Psoas muscle (tissue), 8 donors: ENCODE measurements at regions of chr14 and their contacts with region 1.

Region 1: DNA sequence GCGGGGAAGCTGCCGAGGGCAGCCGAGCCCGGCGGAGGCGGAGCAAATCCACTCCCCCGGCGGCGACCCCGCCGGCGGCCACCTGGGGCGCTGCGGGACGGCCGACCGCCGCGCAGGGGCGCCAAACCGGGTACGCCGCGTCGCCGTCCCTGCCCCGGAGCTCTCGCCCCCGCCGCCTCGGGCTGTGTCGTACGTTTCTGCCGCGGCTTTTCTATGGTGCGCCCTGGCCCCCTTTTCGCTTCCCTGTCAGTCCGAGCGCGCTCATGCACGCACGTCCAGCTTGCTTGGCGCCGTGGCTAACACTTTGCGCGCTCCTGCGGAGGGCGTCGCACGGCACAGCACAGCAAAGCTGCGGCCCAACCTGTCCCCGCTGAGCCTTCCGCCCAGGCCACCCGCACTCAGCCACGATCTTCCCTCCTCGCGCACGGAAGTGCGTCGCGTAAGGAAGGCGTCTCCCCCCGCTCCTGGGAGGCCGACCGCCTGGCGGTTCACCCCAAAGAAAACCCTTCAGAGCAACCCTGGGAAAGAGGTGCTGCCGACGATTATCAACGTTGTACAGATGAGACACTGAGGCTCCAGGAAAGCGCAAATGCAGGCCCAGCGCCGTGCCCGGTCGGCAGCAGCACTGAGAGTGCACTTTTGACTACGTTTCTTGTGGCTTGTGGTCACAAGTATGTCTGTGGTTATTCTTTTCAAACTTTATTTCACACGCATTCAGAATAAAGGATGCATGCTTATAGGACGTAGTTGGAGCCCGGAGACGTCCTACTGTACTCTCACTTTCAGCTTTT is at the start of gene HECTD1:
- DNase-seq: peak; percentile 92 to 96
- ATAC-seq: peak; percentile 86 to 94 (median 90)
- H3K4me3 ChIP-seq: peak within 1 kb of the TSS; percentile 92
- H3K27ac ChIP-seq: peak within 1 kb of the TSS; percentile 99
- H3K4me1 ChIP-seq: peaks cover 20% of the 10 kb centered on the region
- H3K27me3 ChIP-seq: no peaks in the 10 kb centered on the region
- CTCF ChIP-seq: peak; percentile 90
- total RNA-seq, gene HECTD1: 189 to 405 (median 301) TPM

Region 2: GRCh38 chr14:30808576-30808975 is 399.4 kb before region 1 on chr14:
- intact Hi-C with region 1: no loop called
- DNase-seq: no peak
- ATAC-seq: no peak
- H3K4me3 ChIP-seq: no peak overlapping the region
- H3K27ac ChIP-seq: no peak overlapping the region
- H3K4me1 ChIP-seq: no peaks in the 10 kb centered on the region
- H3K27me3 ChIP-seq: no peaks in the 10 kb centered on the region
- CTCF ChIP-seq: no peak

Region 3: GRCh38 chr14:31229638-31230229 is 21.8 kb after region 1 on chr14:
- intact Hi-C with region 1: loop called in 1 of 2 experiments (anchors 2 kb)
- DNase-seq: peak; percentile 56 to 84
- ATAC-seq: peak; percentile 97 to 99 (median 98)
- H3K4me3 ChIP-seq: peak overlapping the region; percentile 26
- H3K27ac ChIP-seq: peak overlapping the region; percentile 77
- H3K4me1 ChIP-seq: peaks cover 10% of the 10 kb centered on the region
- H3K27me3 ChIP-seq: no peaks in the 10 kb centered on the region
- CTCF ChIP-seq: no peak

Region 4: GRCh38 chr14:31286456-31287293 is 78.7 kb after region 1 on chr14:
- intact Hi-C with region 1: no loop called
- DNase-seq: no peak
- ATAC-seq: peak in 3 of 4 donors; percentile 41 to 53 (median 44)
- H3K4me3 ChIP-seq: no peak overlapping the region
- H3K27ac ChIP-seq: no peak overlapping the region
- H3K4me1 ChIP-seq: no peaks in the 10 kb centered on the region
- H3K27me3 ChIP-seq: no peaks in the 10 kb centered on the region
- CTCF ChIP-seq: peak; percentile 24

Region 5: DNA sequence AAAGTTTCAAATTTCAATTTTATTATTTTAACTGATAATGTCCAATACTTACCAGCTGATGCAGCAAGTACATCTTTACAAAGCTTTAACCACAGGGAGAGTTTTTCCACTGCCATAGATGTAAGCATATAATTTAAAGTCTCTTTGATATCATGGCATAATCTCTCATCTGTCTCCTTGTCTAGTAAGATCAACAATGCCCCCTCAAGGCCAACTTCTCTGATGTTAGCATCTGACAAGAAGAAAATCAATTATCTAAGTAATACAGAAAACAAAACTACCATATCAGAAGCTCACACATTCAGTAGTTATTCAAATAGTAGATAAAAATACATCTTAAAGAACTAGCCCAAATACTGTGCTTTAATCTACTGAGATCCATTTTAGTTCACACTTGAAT is 118.2 kb after region 1 on chr14:
- intact Hi-C with region 1: loop called in 1 of 2 experiments (anchors 10 kb)
- DNase-seq: no peak
- ATAC-seq: no peak
- H3K4me3 ChIP-seq: no peak overlapping the region
- H3K27ac ChIP-seq: no peak overlapping the region
- H3K4me1 ChIP-seq: peaks cover 8% of the 10 kb centered on the region
- H3K27me3 ChIP-seq: no peaks in the 10 kb centered on the region
- CTCF ChIP-seq: no peak

Region 6: GRCh38 chr14:31346097-31346496 is 138.1 kb after region 1 on chr14:
- intact Hi-C with region 1: loop called in 1 of 2 experiments (anchors 5 kb)
- DNase-seq: no peak
- ATAC-seq: no peak
- H3K4me3 ChIP-seq: no peak overlapping the region
- H3K27ac ChIP-seq: no peak overlapping the region
- H3K4me1 ChIP-seq: no peaks in the 10 kb centered on the region
- H3K27me3 ChIP-seq: no peaks in the 10 kb centered on the region
- CTCF ChIP-seq: no peak

Region 7: DNA sequence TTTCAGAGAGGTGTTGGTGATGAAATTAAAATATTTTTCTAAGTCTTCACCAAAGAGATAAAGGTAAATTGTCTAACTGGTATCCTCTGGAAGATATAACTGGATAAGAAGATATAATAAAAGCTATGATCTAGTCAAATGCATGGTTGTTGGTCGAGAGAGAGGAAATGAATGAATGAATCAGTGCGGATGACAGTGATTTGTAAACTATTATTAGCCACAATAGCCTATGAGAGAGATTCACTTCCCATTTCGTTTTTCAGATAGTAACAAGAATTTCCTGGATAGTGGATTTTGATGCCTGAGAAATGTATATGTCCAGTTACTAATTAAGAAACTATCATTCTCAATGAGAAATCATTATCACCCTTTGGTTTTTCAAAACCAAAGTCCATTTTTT is 149.3 kb after region 1 on chr14:
- intact Hi-C with region 1: loop called in 1 of 2 experiments (anchors 5 kb)
- DNase-seq: no peak
- ATAC-seq: no peak
- H3K4me3 ChIP-seq: no peak overlapping the region
- H3K27ac ChIP-seq: no peak overlapping the region
- H3K4me1 ChIP-seq: peaks cover 20% of the 10 kb centered on the region
- H3K27me3 ChIP-seq: no peaks in the 10 kb centered on the region
- CTCF ChIP-seq: no peak